ENCODE measurements at regions of chr1 and their contacts with region 1.

Region 1: GRCh38 chr1:223358826-223359225 is 5.2 kb downstream of the SUSD4 start:
- DNase-seq: no peak
- H3K4me3 ChIP-seq: no peak overlapping the region
- H3K27ac ChIP-seq: no peak overlapping the region
- H3K4me1 ChIP-seq: peaks cover 0 to 5% (median 3%) of the 10 kb centered on the region in 4 experiments; a peak in 2 of 7 replicates
- H3K27me3 ChIP-seq: peaks cover 0 to 16% (median 7%) of the 10 kb centered on the region in 4 experiments; a peak in 4 of 7 replicates
- CTCF ChIP-seq: peak in 2 of 3 experiments; percentile 35 to 36; a peak in 3 of 4 replicates
- EP300 ChIP-seq: no peak
- POLR2A ChIP-seq: no peak
- RAD21 ChIP-seq: peak; percentile 57 to 62

Region 2: DNA sequence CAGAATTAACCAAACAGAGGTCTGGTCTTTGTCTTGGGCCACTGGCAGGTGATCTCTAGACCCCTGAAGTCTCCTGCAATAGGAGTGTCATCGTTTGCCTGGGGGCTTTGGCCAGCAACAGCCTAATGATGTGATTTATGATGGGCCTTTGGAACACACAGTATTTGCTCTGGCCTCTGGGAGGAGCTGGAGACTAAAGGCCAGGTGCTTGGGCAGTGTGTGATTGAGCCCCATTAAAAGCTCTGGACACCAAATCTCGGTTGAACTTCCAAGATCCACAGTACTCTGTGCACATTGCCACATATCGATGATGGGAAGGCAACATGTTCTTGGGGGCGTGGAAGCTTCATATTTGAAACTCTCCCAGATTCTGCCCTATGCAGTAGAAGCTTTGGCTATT is 183.8 kb before region 1 on chr1:
- CTCF ChIA-PET with region 1: interaction called, 16 read pairs
- POLR2A ChIA-PET with region 1: no interaction called
- DNase-seq: no peak
- H3K4me3 ChIP-seq: no peak overlapping the region
- H3K27ac ChIP-seq: no peak overlapping the region
- H3K4me1 ChIP-seq: no peaks in the 10 kb centered on the region
- H3K27me3 ChIP-seq: no peaks in the 10 kb centered on the region; a peak in 1 of 7 replicates
- CTCF ChIP-seq: peak; percentile 35 to 60 (median 55)
- EP300 ChIP-seq: no peak
- POLR2A ChIP-seq: no peak
- RAD21 ChIP-seq: peak; percentile 81 to 85

Measured in H1 (cell line).